Activated naive CD4-positive, alpha-beta T cell treated with anti-CD3 and anti-CD28 coated beads for 36 hours (primary cell): ENCODE measurements at regions of chrX and their contacts with region 1.

Region 1: DNA sequence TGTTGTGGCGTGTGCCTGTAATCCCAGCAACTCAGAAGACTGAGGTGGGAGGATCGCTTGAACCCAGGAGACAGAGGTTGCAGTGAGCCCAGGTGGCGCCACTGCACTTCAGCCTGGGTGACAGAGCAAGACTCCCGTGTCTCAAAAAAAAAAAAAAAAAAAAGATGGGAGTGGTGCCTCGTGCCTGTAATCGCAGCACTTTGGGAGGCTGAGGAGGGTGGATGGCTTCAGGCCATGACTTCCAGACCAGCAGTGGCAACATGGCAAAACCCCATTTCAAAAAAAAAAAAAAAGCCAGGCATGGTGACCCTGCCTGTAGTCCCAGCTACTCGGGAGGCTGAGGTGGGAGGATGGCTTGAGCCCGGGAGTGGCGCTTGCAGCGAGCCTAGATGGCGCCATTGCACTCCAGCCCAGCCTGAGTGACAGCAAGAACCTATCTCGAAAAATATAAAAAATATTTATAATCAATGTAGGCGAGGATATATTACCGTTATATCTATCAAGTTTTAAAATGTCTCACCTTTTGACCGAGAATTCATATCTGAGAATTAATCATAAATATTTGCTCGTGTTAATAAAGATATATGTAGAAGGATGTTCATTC is 27.0 kb downstream of the EIF2S3 start:
- DNase-seq: peak; percentile 73
- H3K4me3 Mint-ChIP-seq: peak overlapping the region; percentile 29
- H3K27ac Mint-ChIP-seq: no peak overlapping the region
- H3K4me1 Mint-ChIP-seq: peaks cover 33% of the 10 kb centered on the region
- H3K27me3 Mint-ChIP-seq: no peaks in the 10 kb centered on the region

Region 2: DNA sequence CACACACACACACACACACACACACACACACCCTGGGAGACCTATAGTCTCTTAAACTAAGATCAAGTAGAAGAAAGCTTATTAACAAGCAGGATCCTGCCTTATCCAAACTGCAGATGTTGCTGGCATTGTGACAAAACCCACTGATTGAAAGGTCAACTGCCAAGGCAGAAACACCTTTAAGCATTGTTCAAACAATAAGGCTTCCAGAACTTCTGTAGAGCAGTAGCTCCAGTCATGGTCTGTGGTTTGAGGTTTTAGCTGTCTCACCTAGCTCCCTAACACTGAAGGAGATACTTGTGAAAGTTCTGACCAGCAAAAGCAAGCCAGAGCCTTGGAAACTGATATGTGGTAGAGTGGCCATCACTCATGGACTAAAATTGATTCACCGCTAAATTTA is 687.3 kb before region 1 on chrX:
- CTCF ChIA-PET with region 1: no interaction called
- intact Hi-C with region 1: no loop called
- DNase-seq: no peak
- H3K4me3 Mint-ChIP-seq: no peak overlapping the region
- H3K27ac Mint-ChIP-seq: no peak overlapping the region
- H3K4me1 Mint-ChIP-seq: no peaks in the 10 kb centered on the region
- H3K27me3 Mint-ChIP-seq: no peaks in the 10 kb centered on the region

Region 3: DNA sequence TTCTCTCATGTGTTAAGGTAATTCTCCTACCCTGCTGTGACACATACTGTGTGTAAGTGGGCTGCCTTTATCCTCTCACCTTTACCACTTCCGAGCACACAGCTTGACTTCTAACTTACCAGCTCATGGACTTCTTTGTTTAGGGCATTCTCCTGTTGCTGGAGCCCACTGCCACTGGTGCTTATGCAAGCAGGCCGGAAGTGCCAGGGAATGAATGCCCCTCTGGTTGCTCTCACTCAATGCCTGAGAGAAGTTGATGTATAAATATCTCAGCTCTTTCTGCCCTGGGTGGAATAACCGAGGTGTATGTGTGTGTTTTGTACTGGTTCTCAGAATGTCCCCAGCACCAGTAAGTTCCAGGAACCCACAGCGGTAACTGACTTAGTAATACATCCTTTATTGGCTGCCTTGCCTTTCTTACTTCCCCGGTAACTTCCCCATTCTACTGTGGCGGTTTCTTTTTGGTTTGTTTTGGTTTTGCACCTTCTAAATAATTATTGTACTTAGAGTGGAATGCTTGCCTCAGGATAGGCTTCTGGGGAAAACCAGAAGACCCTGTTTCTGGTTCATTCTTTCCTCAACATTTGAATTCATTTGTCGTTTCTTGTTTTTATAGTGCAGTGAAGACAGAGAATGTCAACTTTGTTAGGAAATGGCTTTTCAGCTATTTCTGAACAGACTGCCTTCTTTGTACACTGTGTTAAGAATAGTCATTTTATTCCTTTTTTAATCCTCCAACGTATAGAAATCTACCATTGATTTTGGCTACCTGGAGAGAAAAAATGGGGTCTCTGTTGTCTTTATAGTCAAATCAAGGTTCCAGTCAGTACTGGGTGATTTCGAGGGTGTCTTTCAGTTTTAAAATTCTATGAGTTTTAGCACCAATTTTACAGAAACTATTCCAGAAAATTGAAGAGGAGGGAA is 128.5 kb before region 1 on chrX:
- CTCF ChIA-PET with region 1: no interaction called
- intact Hi-C with region 1: loop called (anchors 1 kb)
- DNase-seq: peak; percentile 70
- H3K4me3 Mint-ChIP-seq: peak overlapping the region; percentile 79
- H3K27ac Mint-ChIP-seq: peak overlapping the region; percentile 97
- H3K4me1 Mint-ChIP-seq: peaks cover 16% of the 10 kb centered on the region
- H3K27me3 Mint-ChIP-seq: no peaks in the 10 kb centered on the region

Region 4: GRCh38 chrX:24024819-24025740 is 56.7 kb before region 1 on chrX:
- CTCF ChIA-PET with region 1: no interaction called
- intact Hi-C with region 1: loop called (anchors 1 kb)
- DNase-seq: peak; percentile 89
- H3K4me3 Mint-ChIP-seq: peak overlapping the region; percentile 85
- H3K27ac Mint-ChIP-seq: peak overlapping the region; percentile 71
- H3K4me1 Mint-ChIP-seq: peaks cover 20% of the 10 kb centered on the region
- H3K27me3 Mint-ChIP-seq: no peaks in the 10 kb centered on the region

Region 5: DNA sequence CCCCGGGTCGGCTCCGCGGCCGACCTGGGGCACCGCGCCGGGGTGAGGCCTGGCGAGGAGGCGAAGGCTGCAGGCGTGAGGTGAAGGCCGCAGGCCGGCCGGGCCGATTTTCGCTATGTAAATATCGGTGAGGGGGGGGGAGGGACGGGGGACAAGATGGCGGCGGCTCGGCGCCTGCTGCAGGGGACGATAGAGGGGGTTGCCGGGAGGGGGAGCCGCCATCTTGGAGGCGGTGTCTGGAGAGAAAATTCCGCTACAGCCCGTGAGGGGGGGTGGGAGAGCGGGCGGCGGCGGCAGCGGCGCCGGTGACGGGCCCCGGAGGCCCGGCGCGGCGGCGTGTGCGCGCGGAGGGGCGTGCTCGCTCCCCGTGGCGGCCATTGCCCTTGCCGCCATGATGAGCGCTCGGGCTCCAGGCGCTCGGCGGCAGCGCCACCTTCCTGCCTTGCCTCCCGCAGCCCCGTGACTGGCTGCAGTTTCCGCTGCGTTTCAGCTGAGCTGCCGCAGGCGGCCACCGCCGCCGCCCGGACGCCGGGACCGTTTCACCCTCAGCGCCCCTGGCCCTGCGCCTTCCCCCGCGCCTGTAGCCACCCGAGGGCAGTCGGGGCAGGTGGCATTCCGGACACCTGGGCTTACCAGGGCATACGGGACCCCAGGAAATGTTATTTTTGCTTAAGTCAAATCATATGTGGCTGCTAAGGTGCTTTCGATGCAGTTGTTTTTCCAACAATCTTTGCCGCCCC is 68.5 kb after region 1 on chrX:
- CTCF ChIA-PET with region 1: interaction called, 4 read pairs
- intact Hi-C with region 1: loop called (anchors 1 kb)
- DNase-seq: peak; percentile 89
- H3K4me3 Mint-ChIP-seq: peak overlapping the region; percentile 80
- H3K27ac Mint-ChIP-seq: peak overlapping the region; percentile 89
- H3K4me1 Mint-ChIP-seq: peaks cover 56% of the 10 kb centered on the region
- H3K27me3 Mint-ChIP-seq: no peaks in the 10 kb centered on the region

Region 6: DNA sequence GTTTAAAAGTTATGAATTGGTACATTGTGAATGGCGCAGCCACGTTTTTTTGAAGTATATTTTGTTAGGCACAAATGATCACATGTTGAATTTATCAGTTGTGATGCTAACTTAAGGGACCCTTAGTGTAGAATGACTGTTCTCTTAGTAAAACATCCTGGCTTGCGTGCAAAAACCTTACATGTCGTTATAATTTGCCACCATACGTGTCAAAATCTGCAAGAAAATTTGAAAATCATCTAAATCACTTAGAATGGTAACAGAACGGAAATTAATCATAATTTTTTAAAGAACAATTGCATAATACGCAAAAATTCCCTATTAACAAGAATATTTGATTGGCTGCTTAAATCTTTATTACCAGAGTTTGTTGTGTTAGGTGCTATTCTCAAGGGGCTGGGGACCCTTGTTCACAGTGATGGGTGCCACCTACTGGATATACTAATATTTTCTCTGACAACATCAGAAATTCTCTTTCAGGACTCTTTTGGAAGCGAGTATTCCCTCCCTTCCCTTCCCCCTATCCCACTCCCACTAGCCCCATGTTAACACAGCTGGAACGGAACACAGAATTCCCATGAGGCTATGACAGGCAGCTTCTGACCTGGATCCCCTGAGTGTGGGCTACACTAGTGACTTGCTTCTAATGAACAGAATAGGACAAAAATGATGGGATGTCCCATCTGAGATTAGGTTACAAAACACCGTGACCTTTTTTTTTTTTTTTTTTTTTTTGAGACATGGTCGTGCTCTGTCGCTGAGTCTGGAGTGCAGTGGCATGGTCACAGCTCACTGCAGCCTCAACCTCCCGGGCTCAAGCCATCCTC is 160.3 kb after region 1 on chrX:
- CTCF ChIA-PET with region 1: interaction called, 7 read pairs
- intact Hi-C with region 1: loop called (anchors 1 kb)
- DNase-seq: peak; percentile 12
- H3K4me3 Mint-ChIP-seq: no peak overlapping the region
- H3K27ac Mint-ChIP-seq: no peak overlapping the region
- H3K4me1 Mint-ChIP-seq: peaks cover 11% of the 10 kb centered on the region
- H3K27me3 Mint-ChIP-seq: no peaks in the 10 kb centered on the region

Region 7: GRCh38 chrX:24513416-24513815 is 431.7 kb after region 1 on chrX:
- CTCF ChIA-PET with region 1: no interaction called
- intact Hi-C with region 1: no loop called
- DNase-seq: peak; percentile 75
- H3K4me3 Mint-ChIP-seq: no peak overlapping the region
- H3K27ac Mint-ChIP-seq: peak overlapping the region; percentile 58
- H3K4me1 Mint-ChIP-seq: peaks cover 16% of the 10 kb centered on the region
- H3K27me3 Mint-ChIP-seq: no peaks in the 10 kb centered on the region

Region 8: DNA sequence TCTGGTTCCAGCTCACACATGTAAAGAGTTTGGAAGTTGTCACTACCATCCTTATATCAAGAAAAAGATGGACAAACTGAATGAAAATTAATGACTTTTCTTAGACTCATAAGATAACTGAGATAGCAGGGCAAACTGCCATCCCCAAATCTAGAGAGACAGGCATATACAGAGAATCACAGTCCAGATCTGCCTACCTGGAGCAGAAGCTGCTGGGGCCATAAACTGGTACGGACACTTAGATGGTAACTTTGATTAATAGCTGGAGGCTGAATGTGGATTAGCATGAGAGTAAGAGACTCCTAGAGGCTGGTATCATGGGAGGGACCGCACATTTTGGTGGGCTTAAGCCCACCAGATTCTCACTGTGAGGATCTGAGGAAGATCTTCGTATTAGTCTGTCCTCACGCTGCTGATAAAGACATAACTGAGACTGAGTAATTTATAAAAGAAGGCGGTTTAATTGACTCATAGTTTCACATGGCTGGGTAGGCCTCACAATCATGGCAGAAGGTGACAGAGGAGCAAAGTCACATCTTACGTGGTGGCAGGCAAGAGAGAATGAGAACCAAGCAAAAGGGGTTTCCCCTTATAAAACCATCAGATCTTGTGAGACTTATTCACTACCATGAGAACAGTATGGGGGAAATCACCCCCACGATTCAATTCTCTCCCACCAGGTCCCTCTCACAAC is 601.1 kb after region 1 on chrX:
- CTCF ChIA-PET with region 1: no interaction called
- intact Hi-C with region 1: loop called (anchors 1 kb)
- DNase-seq: peak; percentile 72
- H3K4me3 Mint-ChIP-seq: no peak overlapping the region
- H3K27ac Mint-ChIP-seq: peak overlapping the region; percentile 59
- H3K4me1 Mint-ChIP-seq: peaks cover 19% of the 10 kb centered on the region
- H3K27me3 Mint-ChIP-seq: peaks cover 6% of the 10 kb centered on the region